Activated T-helper 1 cell treated with anti-CD3 and anti-CD28 coated beads, Interleukin-12 subunit alpha, Interleukin-12 subunit beta, Interleukin-2, Interleukin-4 antibody, amounts not matched to agents 30 ng/mL and 10 ng/mL and 1 ng/mL, durations not matched to agents 14 hours and 24 hours and 36 hours (primary cell): ENCODE measurements at regions of chr3 and their contacts with region 1.

Region 1: DNA sequence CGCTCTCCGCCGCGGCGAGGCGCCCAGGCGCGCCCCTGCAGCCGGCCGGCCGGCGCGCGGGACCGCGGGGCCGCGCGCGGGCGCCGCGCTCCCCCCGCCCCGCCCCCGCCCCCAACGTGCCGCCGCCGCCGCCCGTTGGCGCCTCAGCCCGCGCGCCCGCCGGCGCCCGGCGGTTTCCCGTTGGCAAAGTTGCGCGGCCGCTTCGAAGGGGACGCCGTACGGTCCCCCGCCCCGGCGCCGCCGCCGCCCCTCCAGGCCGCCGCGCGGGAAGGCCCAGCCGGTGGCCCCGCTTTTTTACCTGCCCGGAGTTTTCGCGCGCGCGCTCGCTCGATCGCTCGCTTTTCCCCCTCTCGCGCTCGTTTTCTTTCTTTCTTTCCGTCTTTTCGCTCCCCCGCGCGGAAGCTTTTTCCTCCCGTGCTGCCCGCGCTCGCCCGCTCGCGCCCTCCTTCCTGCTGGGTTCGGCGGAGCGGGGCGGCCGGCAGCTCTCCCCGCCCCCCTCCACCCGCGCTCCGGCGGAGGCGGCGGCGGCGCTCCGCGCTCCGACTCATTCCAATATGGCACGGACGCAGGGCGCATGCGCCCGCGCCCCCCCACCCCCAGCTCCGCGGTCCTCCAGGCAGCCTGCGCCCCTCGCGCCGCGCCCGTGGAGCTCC is at the start of gene SFMBT1:
- DNase-seq: peak; percentile 60
- H3K4me3 Mint-ChIP-seq: peak within 1 kb of the TSS; percentile 95
- H3K27ac Mint-ChIP-seq: peak within 1 kb of the TSS; percentile 91
- H3K4me1 Mint-ChIP-seq: peaks cover 38% of the 10 kb centered on the region
- H3K27me3 Mint-ChIP-seq: peaks cover 22% of the 10 kb centered on the region
- total RNA-seq, gene SFMBT1: 28.4 and 31.0 TPM in 2 replicates

Region 2: GRCh38 chr3:52536369-52537164 is 509.1 kb before region 1 on chr3 and contains the start of gene UQCC5:
- intact Hi-C with region 1: loop called (anchors 2 kb)
- DNase-seq: peak; percentile 98
- H3K4me3 Mint-ChIP-seq: peak within 1 kb of the TSS; percentile 100
- H3K27ac Mint-ChIP-seq: peak within 1 kb of the TSS; percentile 99
- H3K4me1 Mint-ChIP-seq: peaks cover 42% of the 10 kb centered on the region
- H3K27me3 Mint-ChIP-seq: no peaks in the 10 kb centered on the region
- total RNA-seq, gene UQCC5: 14.1 and 17.1 TPM in 2 replicates

Region 3: GRCh38 chr3:52770496-52771333 is 274.9 kb before region 1 on chr3 and contains the start of gene NEK4:
- intact Hi-C with region 1: loop called (anchors 5 kb)
- DNase-seq: peak; percentile 84
- H3K4me3 Mint-ChIP-seq: peak within 1 kb of the TSS; percentile 94
- H3K27ac Mint-ChIP-seq: peak within 1 kb of the TSS; percentile 96
- H3K4me1 Mint-ChIP-seq: peaks cover 22% of the 10 kb centered on the region
- H3K27me3 Mint-ChIP-seq: peaks cover 4% of the 10 kb centered on the region
- total RNA-seq, gene NEK4: 27.8 and 32.9 TPM in 2 replicates

Region 4: GRCh38 chr3:52934630-52935530 is 110.8 kb before region 1 on chr3:
- intact Hi-C with region 1: loop called (anchors 2 kb)
- DNase-seq: peak; percentile 16
- H3K4me3 Mint-ChIP-seq: no peak overlapping the region
- H3K27ac Mint-ChIP-seq: peak overlapping the region; percentile 35
- H3K4me1 Mint-ChIP-seq: peaks cover 9% of the 10 kb centered on the region
- H3K27me3 Mint-ChIP-seq: no peaks in the 10 kb centered on the region

Region 5: DNA sequence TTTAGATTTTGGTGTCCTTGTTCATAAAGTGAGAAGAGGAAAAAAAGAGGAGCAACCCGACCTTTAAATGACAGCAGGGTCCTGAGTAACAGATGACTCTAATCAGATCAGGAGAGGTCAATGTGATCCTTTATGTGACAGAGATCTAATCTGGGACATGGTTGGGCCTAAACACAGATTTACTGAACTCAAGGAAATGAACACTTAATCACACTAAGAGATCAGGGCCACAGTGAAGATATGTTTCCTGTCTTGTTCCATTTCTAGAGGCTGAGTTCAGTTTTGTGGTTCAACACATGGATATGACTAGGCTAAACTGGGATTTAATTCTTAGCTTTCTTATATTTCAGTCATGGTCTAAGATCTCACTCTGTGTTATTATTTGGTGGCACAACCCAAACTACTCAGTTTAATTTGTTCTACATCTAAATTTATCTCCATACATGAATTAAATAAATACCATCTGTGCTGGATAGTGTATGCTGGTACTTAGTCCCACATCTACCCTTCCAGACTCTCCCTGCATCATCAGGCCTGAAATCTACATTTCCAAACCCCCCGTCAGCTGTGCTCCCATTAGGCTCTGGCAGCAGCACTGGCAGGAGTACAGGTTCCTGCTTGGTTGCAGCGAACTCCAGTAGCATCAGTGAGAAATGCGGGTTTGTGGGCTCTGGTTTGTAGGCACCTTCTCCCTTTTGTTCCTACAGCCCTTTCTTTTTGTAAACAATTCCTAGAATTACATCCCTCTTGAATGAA is 22.4 kb before region 1 on chr3:
- intact Hi-C with region 1: loop called (anchors 1 kb)
- DNase-seq: no peak
- H3K4me3 Mint-ChIP-seq: no peak overlapping the region
- H3K27ac Mint-ChIP-seq: no peak overlapping the region
- H3K4me1 Mint-ChIP-seq: peaks cover 51% of the 10 kb centered on the region
- H3K27me3 Mint-ChIP-seq: peaks cover 1% of the 10 kb centered on the region

Region 6: DNA sequence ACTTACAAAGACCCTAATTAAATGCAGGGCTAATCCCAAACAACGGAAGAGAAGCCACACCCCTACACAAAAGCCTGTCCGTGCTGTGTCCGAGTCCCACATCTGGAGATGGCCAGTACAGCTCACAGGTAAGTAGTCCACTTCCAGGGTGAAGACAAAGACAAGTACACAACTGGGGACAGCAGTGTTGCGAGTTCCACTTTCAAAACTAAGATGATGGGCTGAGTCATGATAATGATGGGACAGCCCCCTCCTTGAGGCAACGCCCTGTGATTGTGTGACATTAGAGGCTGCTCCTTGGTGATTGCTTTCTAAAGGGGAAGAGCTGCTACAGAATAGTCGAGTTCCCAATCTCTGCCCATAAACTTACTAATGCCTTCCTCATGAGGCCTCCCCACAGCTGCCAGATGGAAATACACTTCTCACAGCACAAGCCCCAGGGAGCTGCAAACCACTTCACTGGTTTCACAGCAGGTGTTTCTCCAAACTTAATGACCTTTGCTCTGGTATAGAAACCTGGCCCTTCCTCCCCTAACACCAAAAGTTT is 57.0 kb after region 1 on chr3:
- intact Hi-C with region 1: loop called (anchors 2 kb)
- DNase-seq: peak; percentile 62
- H3K4me3 Mint-ChIP-seq: peak overlapping the region; percentile 69
- H3K27ac Mint-ChIP-seq: peak overlapping the region; percentile 94
- H3K4me1 Mint-ChIP-seq: peaks cover 78% of the 10 kb centered on the region
- H3K27me3 Mint-ChIP-seq: no peaks in the 10 kb centered on the region